ENCODE measurements at regions of chr10 and their contacts with region 1.

Region 1: GRCh38 chr10:124743971-124744685 is at the start of gene FAM53B:
- DNase-seq: peak in 1 of 2 donors; percentile 95
- H3K4me3 ChIP-seq: peak within 1 kb of the TSS; percentile 72
- CTCF ChIP-seq: no peak
- POLR2A ChIP-seq: no peak
- total RNA-seq, gene FAM53B: 41.5 to 69.1 (median 58.2) TPM

Region 2: DNA sequence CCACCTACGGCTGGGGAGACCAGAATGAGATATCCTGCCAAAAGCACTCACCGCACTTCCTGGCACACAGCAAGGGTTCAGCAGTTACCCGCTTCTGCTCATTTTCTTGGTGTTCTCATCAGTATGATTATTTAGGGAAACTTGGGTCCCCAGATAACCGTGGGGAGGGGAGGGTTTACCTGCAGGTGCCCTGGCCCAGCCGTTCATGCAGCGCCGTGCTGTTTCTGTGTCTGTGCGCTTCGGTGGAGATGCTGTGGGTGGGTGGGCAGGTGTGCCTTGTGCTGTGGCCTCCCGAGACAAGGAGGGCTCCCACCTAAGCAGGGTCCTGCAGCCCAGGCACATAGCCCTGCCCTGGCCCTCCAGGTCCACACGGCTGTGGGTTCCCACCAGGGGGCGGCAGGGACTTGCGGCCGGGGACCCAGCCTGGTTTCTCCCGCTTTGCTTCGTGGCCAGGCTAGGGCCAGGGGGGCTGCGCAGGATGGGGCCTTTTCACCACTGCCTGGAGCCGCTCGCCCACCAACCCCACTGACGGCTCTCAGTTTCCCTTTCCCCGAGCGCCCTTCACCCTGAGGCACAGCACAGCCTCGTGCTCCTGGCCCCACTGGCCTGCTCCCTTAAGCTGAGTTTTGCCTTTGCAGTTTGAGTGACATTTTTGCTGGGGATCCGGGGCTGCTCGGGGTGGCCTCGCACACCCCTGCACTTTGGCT is 204.0 kb before region 1 on chr10:
- intact Hi-C with region 1: loop called (anchors 2 kb)
- DNase-seq: peak in 1 of 2 donors; percentile 94
- H3K4me3 ChIP-seq: no peak overlapping the region
- CTCF ChIP-seq: no peak
- POLR2A ChIP-seq: no peak

Measured in lower leg skin (tissue), 4 donors.